ENCODE measurements at regions of chr4 and their contacts with region 1.

Region 1: GRCh38 chr4:113547487-113548042 is 214.0 kb downstream of the CAMK2D start:
- DNase-seq: peak; percentile 90
- H3K4me3 Mint-ChIP-seq: no peak overlapping the region
- H3K27ac Mint-ChIP-seq: peak overlapping the region; percentile 3
- H3K4me1 Mint-ChIP-seq: peaks cover 30% of the 10 kb centered on the region
- H3K27me3 Mint-ChIP-seq: no peaks in the 10 kb centered on the region

Region 2: GRCh38 chr4:113566015-113566795 is 18.6 kb after region 1 on chr4:
- intact Hi-C with region 1: loop called (anchors 1 kb)
- DNase-seq: no peak
- H3K4me3 Mint-ChIP-seq: no peak overlapping the region
- H3K27ac Mint-ChIP-seq: no peak overlapping the region
- H3K4me1 Mint-ChIP-seq: peaks cover 48% of the 10 kb centered on the region
- H3K27me3 Mint-ChIP-seq: no peaks in the 10 kb centered on the region

Region 3: GRCh38 chr4:113618205-113618604 is 70.6 kb after region 1 on chr4:
- intact Hi-C with region 1: no loop called
- DNase-seq: no peak
- H3K4me3 Mint-ChIP-seq: no peak overlapping the region
- H3K27ac Mint-ChIP-seq: no peak overlapping the region
- H3K4me1 Mint-ChIP-seq: peaks cover 16% of the 10 kb centered on the region
- H3K27me3 Mint-ChIP-seq: no peaks in the 10 kb centered on the region

Region 4: DNA sequence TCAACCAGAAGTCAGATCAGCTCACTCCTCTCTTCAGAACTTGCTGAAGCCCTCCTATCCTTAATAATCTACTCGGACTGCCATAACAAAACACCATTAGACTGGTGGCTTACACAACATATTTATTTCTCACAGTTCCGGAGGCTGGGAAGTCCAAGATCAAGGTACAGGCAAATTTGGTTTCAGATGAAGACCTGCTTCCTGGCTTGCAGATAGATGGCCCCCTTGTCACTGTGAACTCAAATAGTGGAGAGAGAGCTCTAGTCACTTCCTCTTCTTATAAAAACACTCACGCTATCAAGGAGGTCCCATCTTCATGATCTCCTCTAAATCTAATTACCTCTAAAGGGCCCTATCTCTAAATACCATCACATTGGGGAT is 88.9 kb after region 1 on chr4:
- intact Hi-C with region 1: loop called (anchors 1 kb)
- DNase-seq: no peak
- H3K4me3 Mint-ChIP-seq: peak overlapping the region; percentile 45
- H3K27ac Mint-ChIP-seq: peak overlapping the region; percentile 63
- H3K4me1 Mint-ChIP-seq: peaks cover 47% of the 10 kb centered on the region
- H3K27me3 Mint-ChIP-seq: no peaks in the 10 kb centered on the region

Region 5: GRCh38 chr4:113901994-113902787 is 354.6 kb after region 1 on chr4:
- intact Hi-C with region 1: loop called (anchors 5 kb)
- DNase-seq: peak; percentile 51
- H3K4me3 Mint-ChIP-seq: peak overlapping the region; percentile 30
- H3K27ac Mint-ChIP-seq: peak overlapping the region; percentile 42
- H3K4me1 Mint-ChIP-seq: peaks cover 43% of the 10 kb centered on the region
- H3K27me3 Mint-ChIP-seq: no peaks in the 10 kb centered on the region